ENCODE measurements at regions of chr5 and their contacts with region 1.

Region 1: GRCh38 chr5:92505145-92505544 is 1075.9 kb downstream of the NR2F1-AS1 start:
- DNase-seq: no peak
- H3K4me3 ChIP-seq: no peak overlapping the region
- CTCF ChIP-seq: no peak

Region 2: GRCh38 chr5:92484484-92484883 is 20.7 kb before region 1 on chr5:
- CTCF ChIA-PET with region 1: no interaction called
- POLR2A ChIA-PET with region 1: no interaction called
- DNase-seq: no peak
- H3K4me3 ChIP-seq: no peak overlapping the region
- CTCF ChIP-seq: no peak

Region 3: DNA sequence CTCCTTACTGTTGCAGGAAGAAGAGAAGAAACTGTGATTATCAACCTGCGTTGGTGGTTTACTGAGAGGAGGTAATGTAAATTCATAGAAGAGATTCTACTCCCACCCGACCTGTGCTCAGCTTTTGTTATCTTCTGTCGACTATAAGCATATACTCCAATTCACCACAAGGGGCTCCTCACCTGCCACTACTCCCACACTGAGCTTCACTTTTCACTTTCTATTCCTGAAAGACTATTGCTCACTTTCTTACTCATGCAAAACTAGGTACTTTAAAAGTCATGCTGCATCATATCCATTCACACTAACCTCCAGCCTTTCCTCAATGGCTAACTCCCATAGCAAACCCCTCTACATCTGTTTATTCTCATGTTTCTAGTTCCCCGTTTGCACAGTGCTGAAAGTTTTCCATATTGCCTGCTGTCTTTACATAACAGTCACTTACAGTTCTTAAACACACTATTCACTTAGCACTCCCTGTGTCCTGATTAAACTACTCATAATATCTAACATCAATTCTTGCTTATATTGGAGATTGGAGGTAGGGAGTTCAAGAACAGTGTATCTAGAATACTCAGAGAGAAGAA is 13.3 kb after region 1 on chr5:
- CTCF ChIA-PET with region 1: interaction called, 15 read pairs
- POLR2A ChIA-PET with region 1: no interaction called
- DNase-seq: no peak
- H3K4me3 ChIP-seq: no peak overlapping the region
- CTCF ChIP-seq: peak; percentile 44

Measured in AG04449 (cell line).